A549 (cell line): ENCODE measurements at regions of chr20 and their contacts with region 1.

Region 1: GRCh38 chr20:23050847-23051631 is 1.6 kb upstream of the THBD start:
- DNase-seq: peak in 1 of 2 experiments; percentile 77
- ATAC-seq: peak; percentile 3 to 34
- H3K4me3 ChIP-seq: peak overlapping the region; percentile 72
- H3K27ac ChIP-seq: peak overlapping the region; percentile 93 to 95
- H3K4me1 ChIP-seq: peaks cover 29% of the 10 kb centered on the region
- CTCF ChIP-seq: peak; percentile 76
- EP300 ChIP-seq: no peak
- POLR2A ChIP-seq: no peak
- RAD21 ChIP-seq: peak; percentile 73 to 74

Region 2: DNA sequence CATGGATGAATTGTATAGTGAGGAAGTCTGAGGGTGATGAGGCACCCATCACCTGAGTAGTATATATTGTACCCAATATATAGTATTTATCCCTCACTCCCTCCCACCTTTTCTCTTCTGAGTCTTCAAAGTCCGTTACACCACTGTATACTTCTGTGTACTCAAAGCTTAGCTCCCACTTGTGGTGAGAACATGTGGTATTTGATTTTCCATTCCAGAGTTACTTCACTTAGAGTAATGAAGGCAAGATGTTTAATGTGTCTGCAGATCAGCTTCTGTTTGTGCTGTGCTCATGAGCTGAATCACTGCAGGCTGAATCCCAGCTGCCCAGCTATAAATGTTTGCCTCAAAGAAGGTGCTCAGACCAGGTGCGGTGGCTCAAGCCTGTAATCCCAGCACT is 327.4 kb before region 1 on chr20:
- CTCF ChIA-PET with region 1: interaction called, 10 read pairs
- POLR2A ChIA-PET with region 1: no interaction called
- DNase-seq: peak in 1 of 2 experiments; percentile 29
- ATAC-seq: peak in 1 of 2 experiments; percentile 57; a peak in 4 of 6 replicates
- H3K4me3 ChIP-seq: no peak overlapping the region
- H3K27ac ChIP-seq: peak overlapping the region; percentile 47 to 68; a peak in 5 of 6 replicates
- H3K4me1 ChIP-seq: peaks cover 35% of the 10 kb centered on the region
- CTCF ChIP-seq: no peak
- EP300 ChIP-seq: no peak
- POLR2A ChIP-seq: no peak
- RAD21 ChIP-seq: 0 out of 5 replicates have a peak, but pooled peaks of 1 of the 2 experiments have one; percentile 9

Region 3: GRCh38 chr20:22805219-22805618 is 245.8 kb before region 1 on chr20:
- CTCF ChIA-PET with region 1: interaction called, 11 read pairs
- POLR2A ChIA-PET with region 1: interaction called, 3 read pairs
- DNase-seq: peak; percentile 33 to 80
- ATAC-seq: peak; percentile 49 to 62; a peak in 4 of 6 replicates
- H3K4me3 ChIP-seq: no peak overlapping the region
- H3K27ac ChIP-seq: peak overlapping the region; percentile 74 to 77; a peak in 5 of 6 replicates
- H3K4me1 ChIP-seq: peaks cover 51% of the 10 kb centered on the region
- CTCF ChIP-seq: no peak
- EP300 ChIP-seq: no peak
- POLR2A ChIP-seq: no peak
- RAD21 ChIP-seq: no peak

Region 4: GRCh38 chr20:23034721-23035671 is 16.0 kb before region 1 on chr20 and contains the start of gene SSTR4:
- CTCF ChIA-PET with region 1: interaction called, 15 read pairs
- POLR2A ChIA-PET with region 1: no interaction called
- DNase-seq: no peak
- ATAC-seq: peak; percentile 7 to 41; a peak in 1 of 6 replicates
- H3K4me3 ChIP-seq: peak within 1 kb of the TSS; percentile 33
- H3K27ac ChIP-seq: peak within 1 kb of the TSS; percentile 51 to 71; a peak in 5 of 6 replicates
- H3K4me1 ChIP-seq: peaks cover 9% of the 10 kb centered on the region; the same call in 2 of the 3 replicates
- CTCF ChIP-seq: no peak
- EP300 ChIP-seq: no peak
- POLR2A ChIP-seq: no peak
- RAD21 ChIP-seq: no peak
- polyA plus RNA-seq, gene SSTR4: 0.07 TPM in 1 of 2 replicates, not detected in the other

Region 5: GRCh38 chr20:23235173-23236027 is 184.4 kb after region 1 on chr20:
- CTCF ChIA-PET with region 1: interaction called, 13 read pairs
- POLR2A ChIA-PET with region 1: no interaction called
- DNase-seq: peak; percentile 47 to 78
- ATAC-seq: peak; percentile 73 to 94; a peak in 5 of 6 replicates
- H3K4me3 ChIP-seq: no peak overlapping the region
- H3K27ac ChIP-seq: no peak overlapping the region
- H3K4me1 ChIP-seq: peaks cover 2% of the 10 kb centered on the region; the same call in 1 of the 3 replicates
- CTCF ChIP-seq: peak; percentile 53
- EP300 ChIP-seq: no peak
- POLR2A ChIP-seq: no peak
- RAD21 ChIP-seq: peak; percentile 52 to 71; a peak in 4 of 5 replicates

Region 6: DNA sequence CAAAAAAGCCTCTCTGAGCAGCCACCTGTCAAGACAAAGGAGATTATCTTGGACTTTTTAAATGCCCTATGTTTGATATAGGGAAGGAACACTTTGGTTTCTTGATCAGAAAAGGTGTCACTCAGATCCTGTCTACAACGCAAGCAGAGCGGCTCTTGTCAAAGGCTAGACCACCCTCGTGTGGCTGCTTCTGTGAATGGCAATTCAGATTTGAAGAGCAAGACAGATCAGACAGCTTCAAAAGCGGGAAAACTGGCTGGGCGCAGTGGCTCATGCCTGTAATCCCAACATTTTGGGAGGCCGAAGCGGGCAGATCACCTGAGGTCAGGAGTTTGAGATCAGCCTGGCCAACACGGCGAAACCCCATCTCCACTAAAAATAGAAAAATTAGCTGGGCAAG is 289.5 kb after region 1 on chr20:
- CTCF ChIA-PET with region 1: interaction called, 156 read pairs
- POLR2A ChIA-PET with region 1: interaction called, 48 read pairs
- DNase-seq: peak; percentile 83 to 87
- ATAC-seq: peak; percentile 85 to 95
- H3K4me3 ChIP-seq: no peak overlapping the region
- H3K27ac ChIP-seq: peak overlapping the region; percentile 6 to 60; a peak in 5 of 6 replicates
- H3K4me1 ChIP-seq: no peaks in the 10 kb centered on the region
- CTCF ChIP-seq: peak; percentile 90
- EP300 ChIP-seq: no peak
- POLR2A ChIP-seq: no peak
- RAD21 ChIP-seq: peak; percentile 92 to 96